ENCODE measurements at regions of chr19 and their contacts with region 1.

Region 1: DNA sequence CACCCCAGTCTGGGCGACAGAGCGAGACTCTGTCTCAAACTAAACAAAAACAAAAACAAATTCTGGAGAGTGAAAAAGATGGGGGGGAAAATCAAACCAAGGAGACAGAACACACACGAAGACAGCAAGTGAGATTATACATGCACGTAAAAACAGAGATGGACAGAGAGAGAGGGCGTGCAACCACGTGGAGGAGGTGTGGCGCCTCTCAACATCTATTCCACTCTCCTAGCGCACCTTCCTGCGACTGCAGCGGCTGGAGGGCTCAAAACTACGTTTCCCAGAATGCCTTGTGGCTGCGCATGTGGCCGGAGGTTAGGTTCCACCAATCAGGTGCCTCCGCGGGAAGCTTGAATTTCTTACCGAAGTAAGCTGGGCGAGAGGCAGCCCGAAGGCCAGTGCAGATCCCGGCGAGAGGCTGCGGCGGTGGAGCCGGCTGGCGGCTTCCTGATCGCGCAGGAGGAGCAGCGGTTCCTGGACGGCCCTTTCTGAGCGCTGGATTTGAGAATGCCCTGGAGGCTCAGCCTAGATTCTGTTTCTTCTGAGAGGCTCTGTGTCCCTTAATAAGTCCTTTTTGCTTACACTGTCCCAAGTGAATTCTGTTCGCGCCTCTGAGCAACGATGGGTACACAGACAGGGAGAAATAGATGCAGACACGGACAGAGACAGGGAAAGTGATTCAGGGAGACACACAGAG is 13.1 kb upstream of the NANOS2 start:
- DNase-seq: peak; percentile 72 to 94 (median 88)
- ATAC-seq: peak; percentile 100
- H3K4me3 ChIP-seq: no peak overlapping the region
- H3K4me3 Mint-ChIP-seq: no peak overlapping the region
- H3K27ac ChIP-seq: no peak overlapping the region
- H3K27ac Mint-ChIP-seq: peak overlapping the region; percentile 7
- H3K4me1 ChIP-seq: peaks cover 7% of the 10 kb centered on the region
- H3K4me1 Mint-ChIP-seq: peaks cover 8% of the 10 kb centered on the region
- H3K27me3 ChIP-seq: no peaks in the 10 kb centered on the region
- H3K27me3 Mint-ChIP-seq: peaks cover 4% of the 10 kb centered on the region
- CTCF ChIP-seq: peak; percentile 15

Region 2: DNA sequence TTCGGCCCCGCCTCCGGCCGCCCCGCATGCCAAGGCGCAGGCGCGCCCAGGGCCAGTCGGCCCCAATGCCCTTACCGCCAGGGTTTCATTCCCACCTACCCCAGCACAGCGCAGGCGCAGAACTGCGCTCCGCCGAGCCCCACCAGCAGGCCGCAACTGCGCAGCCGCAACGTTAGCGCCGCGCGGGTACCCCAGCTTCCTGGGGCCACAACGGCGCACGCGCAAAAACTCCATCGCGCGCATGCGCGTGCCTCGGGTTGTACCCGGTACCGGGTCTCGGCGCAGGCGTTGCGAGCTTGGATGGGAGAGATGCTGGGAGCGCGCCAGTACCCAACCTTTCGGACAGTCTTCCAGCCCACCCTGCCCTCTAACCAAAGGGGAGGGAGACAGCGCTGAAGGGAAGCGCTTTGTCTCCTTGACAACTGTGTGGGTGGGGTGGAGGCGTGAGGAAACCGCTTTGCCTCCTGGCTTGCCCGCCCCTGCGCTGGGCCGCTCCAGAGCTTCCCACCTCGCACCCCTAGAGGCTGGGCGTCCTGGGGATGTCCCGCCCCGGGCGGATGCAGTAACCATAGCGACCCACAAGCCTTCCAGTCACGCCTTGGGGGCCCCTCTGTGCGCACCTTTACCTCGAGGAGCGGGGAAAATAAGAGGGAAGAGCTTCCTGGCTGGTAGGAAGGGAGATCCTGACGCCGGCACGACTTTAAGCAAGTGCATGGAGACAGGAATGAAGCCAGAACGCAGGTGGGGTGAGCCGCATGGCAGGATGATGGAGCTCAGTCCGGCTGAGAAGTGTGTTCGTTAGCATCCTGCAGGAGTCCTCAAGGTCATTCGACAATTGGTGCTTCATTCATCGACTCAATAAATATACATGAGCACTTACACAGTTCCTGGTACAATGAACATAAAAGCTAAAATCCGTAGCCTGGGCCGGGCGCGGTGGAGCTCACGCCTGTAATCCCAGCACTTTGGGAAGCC is 24.8 kb before region 1 on chr19:
- CTCF ChIA-PET with region 1: no interaction called
- POLR2A ChIA-PET with region 1: no interaction called
- intact Hi-C with region 1: loop called (anchors 1 kb)
- DNase-seq: peak; percentile 98 to 100 (median 99)
- ATAC-seq: peak; percentile 82
- H3K4me3 ChIP-seq: peak overlapping the region; percentile 76 to 83
- H3K4me3 Mint-ChIP-seq: peak overlapping the region; percentile 92
- H3K27ac ChIP-seq: peak overlapping the region; percentile 64 to 77
- H3K27ac Mint-ChIP-seq: peak overlapping the region; percentile 72
- H3K4me1 ChIP-seq: peaks cover 17% of the 10 kb centered on the region
- H3K4me1 Mint-ChIP-seq: peaks cover 26% of the 10 kb centered on the region
- H3K27me3 ChIP-seq: no peaks in the 10 kb centered on the region
- H3K27me3 Mint-ChIP-seq: no peaks in the 10 kb centered on the region
- CTCF ChIP-seq: no peak

Region 3: GRCh38 chr19:46076951-46077816 is 149.5 kb after region 1 on chr19:
- CTCF ChIA-PET with region 1: no interaction called
- POLR2A ChIA-PET with region 1: no interaction called
- intact Hi-C with region 1: no loop called
- DNase-seq: peak in 2 of 9 experiments; percentile 16 to 44
- ATAC-seq: no peak
- H3K4me3 ChIP-seq: no peak overlapping the region
- H3K4me3 Mint-ChIP-seq: no peak overlapping the region
- H3K27ac ChIP-seq: no peak overlapping the region
- H3K27ac Mint-ChIP-seq: no peak overlapping the region
- H3K4me1 ChIP-seq: peaks cover 11% of the 10 kb centered on the region
- H3K4me1 Mint-ChIP-seq: peaks cover 7% of the 10 kb centered on the region
- H3K27me3 ChIP-seq: peaks cover 7 to 30% of the 10 kb centered on the region in 2 experiments
- H3K27me3 Mint-ChIP-seq: peaks cover 64% of the 10 kb centered on the region
- CTCF ChIP-seq: no peak

Region 4: GRCh38 chr19:46115396-46116106 is 187.8 kb after region 1 on chr19:
- CTCF ChIA-PET with region 1: no interaction called
- POLR2A ChIA-PET with region 1: no interaction called
- intact Hi-C with region 1: no loop called
- DNase-seq: no peak
- ATAC-seq: no peak
- H3K4me3 ChIP-seq: no peak overlapping the region
- H3K4me3 Mint-ChIP-seq: no peak overlapping the region
- H3K27ac ChIP-seq: no peak overlapping the region
- H3K27ac Mint-ChIP-seq: no peak overlapping the region
- H3K4me1 ChIP-seq: no peaks in the 10 kb centered on the region
- H3K4me1 Mint-ChIP-seq: no peaks in the 10 kb centered on the region
- H3K27me3 ChIP-seq: peaks cover 0 to 5% of the 10 kb centered on the region in 2 experiments
- H3K27me3 Mint-ChIP-seq: peaks cover 47% of the 10 kb centered on the region
- CTCF ChIP-seq: no peak

Measured in CD8-positive, alpha-beta T cell (primary cell).